A673 (cell line): ENCODE measurements at regions of chr3 and their contacts with region 1.

Region 1: GRCh38 chr3:175890066-175890465 is 1030.9 kb downstream of the NAALADL2 start:
- DNase-seq: no peak
- H3K4me3 ChIP-seq: no peak overlapping the region
- H3K27ac ChIP-seq: no peak overlapping the region
- H3K4me1 ChIP-seq: no peaks in the 10 kb centered on the region
- H3K27me3 ChIP-seq: no peaks in the 10 kb centered on the region
- CTCF ChIP-seq: no peak

Region 2: DNA sequence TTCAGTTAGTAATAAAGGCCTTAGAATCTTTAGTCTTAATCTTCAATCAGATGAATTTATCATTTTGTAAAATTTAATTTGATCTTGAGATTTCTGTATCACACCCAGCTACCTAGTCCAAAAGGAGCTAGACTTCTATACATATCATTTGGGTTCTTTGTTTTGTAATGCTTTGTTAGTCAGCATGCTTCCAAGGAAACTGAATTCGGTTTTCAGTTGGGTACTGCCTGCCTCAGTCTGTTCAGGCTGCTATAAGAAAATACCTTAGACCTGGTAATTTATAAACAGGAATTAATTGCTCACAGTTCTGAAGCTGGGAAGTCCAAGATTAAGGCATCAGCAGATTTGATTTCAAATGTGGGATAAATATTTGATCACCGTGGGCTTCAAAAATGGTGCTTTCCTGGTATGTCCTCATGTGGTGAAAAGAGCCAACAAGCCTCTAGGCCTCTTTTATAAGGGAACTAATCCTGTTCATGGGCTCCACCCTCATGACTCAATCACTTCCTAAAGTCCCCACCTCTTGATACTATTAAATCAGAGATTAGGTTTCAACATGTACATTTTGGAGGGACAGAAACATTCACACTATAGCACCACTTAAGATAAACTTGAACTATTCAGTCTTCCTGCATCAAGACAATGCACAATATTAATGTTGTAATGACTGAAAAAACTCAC is 230.3 kb before region 1 on chr3:
- CTCF ChIA-PET with region 1: no interaction called
- POLR2A ChIA-PET with region 1: interaction called, 15 read pairs
- intact Hi-C with region 1: no loop called
- DNase-seq: peak; percentile 1
- H3K4me3 ChIP-seq: no peak overlapping the region
- H3K27ac ChIP-seq: no peak overlapping the region
- H3K4me1 ChIP-seq: no peaks in the 10 kb centered on the region
- H3K27me3 ChIP-seq: no peaks in the 10 kb centered on the region
- CTCF ChIP-seq: no peak

Region 3: GRCh38 chr3:175932586-175932985 is 42.5 kb after region 1 on chr3:
- CTCF ChIA-PET with region 1: no interaction called
- POLR2A ChIA-PET with region 1: no interaction called
- intact Hi-C with region 1: loop called (anchors 2 kb)
- DNase-seq: no peak
- H3K4me3 ChIP-seq: no peak overlapping the region
- H3K27ac ChIP-seq: no peak overlapping the region
- H3K4me1 ChIP-seq: no peaks in the 10 kb centered on the region
- H3K27me3 ChIP-seq: no peaks in the 10 kb centered on the region
- CTCF ChIP-seq: no peak